ENCODE measurements at regions of chr18 and their contacts with region 1.

Region 1: DNA sequence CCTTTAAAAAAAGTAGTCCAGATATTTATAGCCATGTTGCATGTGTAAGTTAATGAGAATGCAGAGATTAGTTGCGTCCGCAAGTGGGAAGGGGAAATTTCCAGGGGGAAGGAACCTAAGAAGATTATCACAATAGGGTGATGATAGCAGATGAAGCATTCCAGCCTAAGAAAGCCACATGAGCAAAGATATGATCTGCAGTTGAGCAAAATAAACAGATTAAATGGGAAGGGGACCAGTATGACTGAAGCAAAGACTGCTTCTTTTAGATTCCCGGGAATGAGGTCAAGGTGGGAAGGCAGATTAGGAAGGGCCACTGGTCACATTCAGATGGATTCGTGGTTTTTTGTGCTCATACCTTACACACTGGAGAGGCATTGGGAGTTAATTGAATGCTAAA is 154.6 kb upstream of the CDH2 start:
- DNase-seq: no peak
- H3K4me3 Mint-ChIP-seq: no peak overlapping the region
- H3K27ac Mint-ChIP-seq: no peak overlapping the region
- H3K4me1 Mint-ChIP-seq: no peaks in the 10 kb centered on the region
- H3K27me3 Mint-ChIP-seq: no peaks in the 10 kb centered on the region
- CTCF ChIP-seq: no peak

Region 2: DNA sequence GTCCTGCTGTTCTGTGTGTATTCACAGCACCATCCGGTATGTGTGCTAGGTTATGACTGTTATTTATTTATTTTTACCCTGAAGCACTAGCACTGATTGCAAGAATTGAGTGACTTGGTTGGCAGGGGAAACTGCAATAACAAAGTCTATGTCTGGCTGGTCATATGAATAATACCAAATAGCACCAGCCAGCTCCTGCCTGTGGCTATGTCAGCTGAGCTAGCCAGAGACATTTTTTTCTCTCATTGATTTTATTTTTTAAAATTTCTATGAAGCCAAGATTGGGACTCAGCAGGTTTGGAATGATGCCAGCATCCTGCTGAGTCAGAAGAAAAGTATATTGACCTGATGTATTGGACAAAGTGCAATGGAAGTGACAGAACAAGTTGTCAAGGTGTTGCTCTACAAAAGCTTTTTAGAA is 33.9 kb after region 1 on chr18:
- CTCF ChIA-PET with region 1: no interaction called
- intact Hi-C with region 1: loop called (anchors 2 kb)
- DNase-seq: peak; percentile 79
- H3K4me3 Mint-ChIP-seq: no peak overlapping the region
- H3K27ac Mint-ChIP-seq: peak overlapping the region; percentile 61
- H3K4me1 Mint-ChIP-seq: peaks cover 10% of the 10 kb centered on the region
- H3K27me3 Mint-ChIP-seq: no peaks in the 10 kb centered on the region
- CTCF ChIP-seq: no peak

Measured in Calu3 (cell line).